Testis (tissue), 5 donors: ENCODE measurements at regions of chr12 and their contacts with region 1.

Region 1: DNA sequence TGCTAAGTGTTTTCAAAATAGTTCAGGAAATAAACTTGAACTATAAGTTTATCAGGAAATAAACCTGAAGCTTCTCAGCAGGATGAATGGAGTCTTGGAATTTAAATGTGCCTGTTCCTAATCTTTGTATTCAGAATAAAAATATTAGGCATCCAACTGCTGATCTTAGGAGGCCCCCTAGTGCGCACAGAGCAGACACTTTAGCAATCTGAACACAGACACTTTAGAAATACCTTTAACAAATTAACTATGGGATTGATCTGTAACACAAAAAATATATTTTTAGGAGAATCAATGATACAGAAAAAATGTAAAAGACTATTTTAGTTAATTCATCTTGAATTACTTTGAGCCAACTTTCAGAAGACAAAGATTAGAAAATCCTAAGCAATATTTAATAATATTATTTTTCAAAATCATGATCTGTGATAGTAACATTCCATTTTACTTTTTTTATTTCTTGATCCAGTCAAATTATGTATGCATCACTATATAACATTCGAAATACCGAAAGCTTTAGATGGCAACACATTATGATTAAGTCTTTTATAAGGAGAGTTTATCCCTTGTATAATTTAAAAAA is 80.9 kb downstream of the SLC41A2 start:
- DNase-seq: peak; percentile 74
- H3K4me3 ChIP-seq: no peak overlapping the region
- H3K27ac ChIP-seq: no peak overlapping the region
- H3K4me1 ChIP-seq: no peaks in the 10 kb centered on the region
- H3K27me3 ChIP-seq: no peaks in the 10 kb centered on the region
- CTCF ChIP-seq: peak; percentile 57 to 60 (median 58)
- POLR2A ChIP-seq: no peak

Region 2: DNA sequence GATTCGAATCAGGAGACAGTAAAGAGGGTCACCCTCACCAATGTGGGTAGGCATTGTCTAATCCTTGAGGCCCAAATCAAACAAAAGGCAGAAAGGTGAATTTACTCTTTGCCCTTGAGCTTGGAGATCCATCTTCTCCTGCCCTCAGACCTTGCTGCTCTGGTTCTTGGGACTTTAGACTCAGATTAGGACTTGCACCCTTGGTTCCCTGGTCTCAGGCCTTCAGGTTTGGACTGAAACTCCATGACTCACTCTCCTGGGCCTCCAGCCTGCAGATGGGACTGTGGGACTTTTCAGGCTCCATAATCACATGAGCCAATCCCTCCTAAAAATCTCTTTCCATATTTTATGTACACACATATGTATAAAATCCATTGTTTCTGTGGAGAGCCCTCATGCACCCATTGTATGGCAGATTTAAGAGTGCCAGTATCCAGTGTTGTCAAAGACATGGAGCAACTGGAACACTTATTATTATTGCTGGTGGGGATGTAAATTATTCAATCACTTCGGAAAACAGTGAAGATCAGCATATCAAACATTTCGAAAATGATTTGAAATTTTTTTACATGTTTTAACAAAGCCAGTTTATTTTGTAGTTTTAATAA is 525.0 kb before region 1 on chr12:
- intact Hi-C with region 1: no loop called
- DNase-seq: no peak
- H3K4me3 ChIP-seq: no peak overlapping the region
- H3K27ac ChIP-seq: no peak overlapping the region
- H3K4me1 ChIP-seq: no peaks in the 10 kb centered on the region
- H3K27me3 ChIP-seq: no peaks in the 10 kb centered on the region
- CTCF ChIP-seq: no peak
- POLR2A ChIP-seq: no peak

Region 3: GRCh38 chr12:104381731-104382480 is 495.3 kb before region 1 on chr12:
- intact Hi-C with region 1: loop called (anchors 5 kb)
- DNase-seq: peak; percentile 92
- H3K4me3 ChIP-seq: no peak overlapping the region
- H3K27ac ChIP-seq: no peak overlapping the region
- H3K4me1 ChIP-seq: peaks cover 6% of the 10 kb centered on the region
- H3K27me3 ChIP-seq: no peaks in the 10 kb centered on the region
- CTCF ChIP-seq: peak; percentile 89 to 98 (median 93)
- POLR2A ChIP-seq: no peak

Region 4: DNA sequence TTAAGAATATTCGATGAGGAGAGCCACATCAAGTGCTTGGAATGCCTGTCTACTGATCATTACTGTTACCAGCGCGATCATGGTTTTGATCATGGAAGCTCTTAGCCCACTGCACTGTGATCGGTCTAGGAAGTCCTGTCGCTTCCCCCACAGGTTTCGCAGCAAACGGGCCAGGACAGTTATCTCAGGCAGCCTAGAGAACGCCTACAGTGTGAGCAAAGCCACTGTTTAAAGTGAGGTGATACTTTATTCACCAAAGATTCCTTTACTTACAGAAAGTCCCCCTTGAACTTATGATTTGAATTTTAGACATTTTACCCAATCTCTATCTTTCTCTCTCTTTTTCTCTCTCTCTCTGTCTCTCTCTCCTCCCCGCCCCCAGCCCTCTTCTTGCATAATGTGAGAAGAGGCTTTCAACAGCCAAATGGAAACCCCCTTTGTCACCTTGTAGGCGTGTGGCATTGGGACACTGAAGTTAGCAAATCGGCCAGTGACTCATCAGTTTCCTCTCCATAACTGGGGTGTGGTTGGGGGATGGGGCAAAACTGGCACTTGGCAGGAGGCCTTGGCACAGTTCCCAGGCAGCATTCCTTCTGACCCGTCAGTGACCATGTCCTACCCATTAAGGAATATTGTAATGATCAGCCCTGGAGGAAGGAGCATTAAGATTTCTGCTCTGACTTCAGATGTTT is 205.7 kb before region 1 on chr12:
- intact Hi-C with region 1: no loop called
- DNase-seq: peak; percentile 88
- H3K4me3 ChIP-seq: no peak overlapping the region
- H3K27ac ChIP-seq: peak overlapping the region; percentile 73 to 81
- H3K4me1 ChIP-seq: peaks cover 72% of the 10 kb centered on the region
- H3K27me3 ChIP-seq: no peaks in the 10 kb centered on the region
- CTCF ChIP-seq: no peak
- POLR2A ChIP-seq: no peak